Heart right ventricle (tissue), 16 donors: ENCODE measurements at regions of chr6 and their contacts with region 1.

Region 1: DNA sequence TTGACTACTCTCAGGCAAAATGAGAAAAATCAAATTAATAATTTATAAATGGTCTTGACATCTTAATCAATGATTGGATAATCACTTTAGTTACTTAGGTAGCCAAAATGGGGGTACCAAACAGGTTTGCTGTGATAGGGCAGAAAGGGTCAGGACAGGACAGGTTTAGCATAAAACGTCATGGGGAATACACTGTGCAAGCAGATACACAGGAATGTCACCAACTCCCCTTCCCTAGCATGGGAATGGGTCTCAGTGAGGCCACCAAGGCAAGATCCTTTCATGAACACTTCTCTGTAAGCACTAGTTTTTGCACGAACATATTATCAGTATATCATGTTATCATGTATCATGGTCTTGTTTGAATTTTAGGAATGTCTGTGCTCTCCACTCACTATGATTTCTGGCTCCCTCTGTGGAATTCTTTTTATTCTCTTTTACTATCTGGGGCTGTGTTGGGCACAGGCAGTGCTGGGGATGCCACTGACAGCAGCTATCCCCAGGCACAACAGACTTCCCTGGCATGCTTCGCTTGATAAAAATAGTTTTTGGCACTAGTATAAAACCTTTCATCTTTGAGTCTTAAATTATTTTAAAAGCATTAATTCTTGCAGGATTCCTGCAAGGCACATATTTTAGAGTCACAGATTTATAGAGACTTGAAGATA is 18.3 kb downstream of the PTCHD4 start:
- DNase-seq: no peak
- ATAC-seq: peak in 5 of 8 donors; percentile 57 to 86 (median 68)
- H3K4me3 ChIP-seq: no peak overlapping the region
- H3K27ac ChIP-seq: no peak overlapping the region
- H3K4me1 ChIP-seq: peaks cover 0 to 10% (median 0%) of the 10 kb centered on the region in 9 donors
- H3K27me3 ChIP-seq: no peaks in the 10 kb centered on the region
- CTCF ChIP-seq: no peak

Region 2: GRCh38 chr6:48032151-48032550 is 60.5 kb before region 1 on chr6:
- intact Hi-C with region 1: loop called in 1 of 10 experiments (anchors 1 kb)
- DNase-seq: no peak
- ATAC-seq: peak in 1 of 8 donors; percentile 31
- H3K4me3 ChIP-seq: no peak overlapping the region
- H3K27ac ChIP-seq: no peak overlapping the region
- H3K4me1 ChIP-seq: peaks cover 0 to 5% (median 0%) of the 10 kb centered on the region in 9 donors
- H3K27me3 ChIP-seq: no peaks in the 10 kb centered on the region
- CTCF ChIP-seq: no peak